ENCODE measurements at regions of chr4 and their contacts with region 1.

Region 1: GRCh38 chr4:72290737-72291136 is 258.9 kb downstream of the NPFFR2 start:
- DNase-seq: no peak
- H3K4me3 ChIP-seq: no peak overlapping the region
- H3K27ac ChIP-seq: no peak overlapping the region
- H3K4me1 ChIP-seq: no peaks in the 10 kb centered on the region
- H3K27me3 ChIP-seq: no peaks in the 10 kb centered on the region
- CTCF ChIP-seq: no peak
- EP300 ChIP-seq: no peak
- POLR2A ChIP-seq: no peak

Region 2: GRCh38 chr4:73308286-73308685 is 1017.5 kb after region 1 on chr4:
- in situ Hi-C with region 1: no loop called
- intact Hi-C with region 1: loop called (anchors 5 kb)
- DNase-seq: no peak
- H3K4me3 ChIP-seq: no peak overlapping the region
- H3K27ac ChIP-seq: no peak overlapping the region
- H3K4me1 ChIP-seq: no peaks in the 10 kb centered on the region
- H3K27me3 ChIP-seq: no peaks in the 10 kb centered on the region
- CTCF ChIP-seq: peak in 1 of 5 experiments; percentile 5
- EP300 ChIP-seq: no peak
- POLR2A ChIP-seq: no peak